ENCODE measurements at regions of chr7 and their contacts with region 1.

Region 1: GRCh38 chr7:23273141-23273599 is 26.0 kb upstream of the MALSU1 start:
- DNase-seq: peak; percentile 79
- ATAC-seq: peak; percentile 99
- H3K4me3 Mint-ChIP-seq: peak overlapping the region; percentile 77
- H3K27ac Mint-ChIP-seq: no peak overlapping the region
- H3K4me1 Mint-ChIP-seq: peaks cover 8% of the 10 kb centered on the region
- H3K27me3 Mint-ChIP-seq: no peaks in the 10 kb centered on the region
- CTCF ChIP-seq: peak; percentile 36

Region 2: GRCh38 chr7:22559829-22560489 is 713.2 kb before region 1 on chr7:
- CTCF ChIA-PET with region 1: no interaction called
- POLR2A ChIA-PET with region 1: no interaction called
- intact Hi-C with region 1: no loop called
- DNase-seq: peak; percentile 43
- ATAC-seq: peak; percentile 80
- H3K4me3 Mint-ChIP-seq: peak overlapping the region; percentile 36
- H3K27ac Mint-ChIP-seq: peak overlapping the region; percentile 70
- H3K4me1 Mint-ChIP-seq: peaks cover 50% of the 10 kb centered on the region
- H3K27me3 Mint-ChIP-seq: no peaks in the 10 kb centered on the region
- CTCF ChIP-seq: peak; percentile 24

Region 3: DNA sequence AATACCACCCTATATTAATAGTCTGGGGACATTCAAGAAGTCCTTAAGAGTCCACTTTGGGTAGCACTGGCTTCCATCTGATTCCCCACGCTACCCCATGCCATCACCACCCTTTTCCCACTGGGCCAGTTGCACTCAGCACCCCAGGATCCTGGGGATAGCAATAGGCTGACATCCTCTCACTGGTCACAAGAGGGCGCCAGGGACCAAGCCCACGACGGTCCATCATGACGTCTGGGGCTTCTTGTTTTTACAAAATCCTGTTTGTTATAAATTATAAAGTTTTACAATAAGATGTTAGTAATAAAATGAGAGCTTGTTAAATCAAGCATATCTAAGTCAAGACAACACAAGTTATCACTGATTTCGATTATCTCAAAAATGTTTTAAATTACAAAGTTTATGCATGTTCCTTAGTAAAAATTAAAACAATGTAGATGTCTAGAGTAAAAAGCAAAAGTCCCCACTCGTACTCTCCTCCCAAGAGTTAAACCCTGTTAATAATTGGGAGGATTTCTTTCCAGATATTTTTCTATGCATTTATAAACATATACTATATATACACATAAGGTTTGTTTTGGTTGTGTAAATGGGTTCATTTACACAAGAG is 11.2 kb before region 1 on chr7:
- CTCF ChIA-PET with region 1: interaction called, 23 read pairs
- POLR2A ChIA-PET with region 1: no interaction called
- intact Hi-C with region 1: loop called (anchors 2 kb)
- DNase-seq: no peak
- ATAC-seq: peak; percentile 79
- H3K4me3 Mint-ChIP-seq: no peak overlapping the region
- H3K27ac Mint-ChIP-seq: no peak overlapping the region
- H3K4me1 Mint-ChIP-seq: no peaks in the 10 kb centered on the region
- H3K27me3 Mint-ChIP-seq: peaks cover 2% of the 10 kb centered on the region
- CTCF ChIP-seq: no peak

Region 4: GRCh38 chr7:23347682-23348180 is 74.6 kb after region 1 on chr7:
- CTCF ChIA-PET with region 1: interaction called, 7 read pairs
- POLR2A ChIA-PET with region 1: interaction called, 6 read pairs
- intact Hi-C with region 1: loop called (anchors 1 kb)
- DNase-seq: no peak
- ATAC-seq: peak; percentile 38
- H3K4me3 Mint-ChIP-seq: peak overlapping the region; percentile 44
- H3K27ac Mint-ChIP-seq: peak overlapping the region; percentile 41
- H3K4me1 Mint-ChIP-seq: peaks cover 30% of the 10 kb centered on the region
- H3K27me3 Mint-ChIP-seq: no peaks in the 10 kb centered on the region
- CTCF ChIP-seq: no peak

Region 5: DNA sequence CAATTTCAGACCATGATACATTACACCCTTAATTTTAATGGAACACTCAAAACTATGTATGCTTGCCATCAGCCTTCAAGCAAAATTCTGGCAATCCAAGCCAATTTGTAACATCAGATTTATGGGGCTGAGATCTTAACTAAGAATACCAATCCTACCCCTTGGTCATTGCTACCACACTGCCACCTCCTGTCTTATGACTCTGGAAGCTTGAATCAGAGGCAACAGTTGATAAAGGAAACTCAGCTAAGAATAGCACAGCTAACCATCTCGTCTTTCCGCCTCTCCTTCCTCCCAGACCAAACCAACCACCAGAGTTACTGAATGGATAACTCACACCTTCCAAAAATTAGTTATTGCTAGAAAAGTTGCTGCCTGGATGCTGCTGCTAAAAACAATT is 189.7 kb after region 1 on chr7:
- CTCF ChIA-PET with region 1: interaction called, 21 read pairs
- POLR2A ChIA-PET with region 1: no interaction called
- intact Hi-C with region 1: loop called (anchors 1 kb)
- DNase-seq: no peak
- ATAC-seq: peak; percentile 52
- H3K4me3 Mint-ChIP-seq: no peak overlapping the region
- H3K27ac Mint-ChIP-seq: no peak overlapping the region
- H3K4me1 Mint-ChIP-seq: peaks cover 20% of the 10 kb centered on the region
- H3K27me3 Mint-ChIP-seq: peaks cover 29% of the 10 kb centered on the region
- CTCF ChIP-seq: no peak

Region 6: DNA sequence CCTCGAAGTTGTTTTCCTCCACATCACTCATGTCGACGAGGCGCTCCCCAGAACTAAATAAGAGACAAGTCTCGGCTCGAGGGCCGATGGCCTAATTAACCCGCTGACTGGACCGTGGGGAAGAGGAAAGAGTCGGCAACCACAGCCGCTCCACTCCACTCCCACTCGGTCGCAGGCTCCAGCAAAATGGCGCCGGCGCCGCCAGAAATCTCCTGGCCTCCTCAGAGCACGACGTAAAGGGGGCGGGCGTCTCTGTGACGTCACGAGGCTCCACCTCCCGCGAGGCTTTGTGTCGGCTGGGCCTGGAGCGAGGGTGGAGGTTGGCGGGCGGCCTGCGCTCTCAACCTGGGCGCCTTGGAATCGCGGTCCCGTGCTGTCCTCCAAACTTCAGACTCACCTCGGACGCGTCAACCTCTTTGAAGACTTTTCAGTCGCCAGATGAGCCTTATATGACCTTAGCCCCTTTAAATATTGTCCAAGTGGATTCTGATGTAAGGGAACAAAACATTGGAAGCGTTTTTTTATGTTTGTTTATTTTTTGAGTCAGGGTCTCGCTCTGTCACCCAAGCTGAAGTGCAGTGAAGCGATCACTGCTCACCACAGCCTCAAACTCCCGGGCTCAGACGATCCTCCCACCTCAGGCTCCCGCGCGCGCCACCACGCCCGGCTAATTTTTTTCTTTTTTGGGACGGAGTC is 258.8 kb after region 1 on chr7 and contains the start of gene TRA2A:
- CTCF ChIA-PET with region 1: interaction called, 3 read pairs
- POLR2A ChIA-PET with region 1: no interaction called
- intact Hi-C with region 1: loop called (anchors 5 kb)
- DNase-seq: peak; percentile 97
- ATAC-seq: peak; percentile 89
- H3K4me3 Mint-ChIP-seq: peak within 1 kb of the TSS; percentile 99
- H3K27ac Mint-ChIP-seq: peak within 1 kb of the TSS; percentile 100
- H3K4me1 Mint-ChIP-seq: peaks cover 49% of the 10 kb centered on the region
- H3K27me3 Mint-ChIP-seq: no peaks in the 10 kb centered on the region
- CTCF ChIP-seq: no peak
- total RNA-seq, gene TRA2A: 123 and 144 TPM in 2 replicates

Region 7: DNA sequence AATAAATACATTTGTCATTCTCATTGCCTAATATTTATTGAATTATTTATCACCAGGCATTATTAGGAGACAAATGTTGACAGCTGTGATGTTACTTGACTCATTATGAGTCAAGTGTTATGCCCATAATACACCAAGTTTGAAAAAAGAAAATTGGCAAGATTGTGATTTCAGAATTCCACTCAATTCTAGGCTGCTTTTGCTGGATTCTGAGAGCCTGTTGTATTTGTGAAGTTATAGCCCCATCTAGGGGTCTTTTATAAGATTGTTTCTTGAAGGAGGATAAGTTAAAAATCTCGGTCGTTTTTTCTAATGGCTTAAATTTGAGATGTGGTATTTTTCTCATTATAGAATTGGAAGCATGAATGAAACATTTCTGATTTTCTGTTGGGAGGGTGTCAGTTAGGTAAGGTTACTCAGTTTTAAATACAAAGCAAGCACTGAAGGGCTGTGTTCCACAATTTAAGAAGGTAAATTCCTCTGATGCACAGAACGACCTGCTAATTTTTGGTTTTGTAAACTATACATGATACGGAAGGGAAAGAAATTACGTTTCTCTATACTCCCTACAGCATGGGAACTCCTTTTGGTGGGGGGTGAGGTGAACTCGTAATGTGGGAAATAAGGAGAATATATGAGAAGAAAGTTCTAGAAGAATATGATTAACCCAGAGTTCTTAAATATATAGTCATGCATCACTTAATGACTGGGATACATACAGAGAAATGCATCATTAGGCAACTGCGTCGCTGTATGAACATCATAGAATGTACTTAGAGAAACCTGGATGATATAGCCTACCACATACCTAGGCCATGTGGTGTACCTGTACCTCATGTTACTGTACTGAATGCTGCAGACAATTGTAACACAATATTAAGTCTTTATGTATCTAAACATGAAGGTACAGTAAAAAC is 439.5 kb after region 1 on chr7:
- CTCF ChIA-PET with region 1: interaction called, 9 read pairs
- POLR2A ChIA-PET with region 1: no interaction called
- intact Hi-C with region 1: loop called (anchors 1 kb)
- DNase-seq: no peak
- ATAC-seq: no peak
- H3K4me3 Mint-ChIP-seq: no peak overlapping the region
- H3K27ac Mint-ChIP-seq: no peak overlapping the region
- H3K4me1 Mint-ChIP-seq: no peaks in the 10 kb centered on the region
- H3K27me3 Mint-ChIP-seq: no peaks in the 10 kb centered on the region
- CTCF ChIP-seq: no peak